ENCODE measurements at regions of chr6 and their contacts with region 1.

Region 1: GRCh38 chr6:106512048-106512967 is 117.0 kb downstream of the RTN4IP1 start:
- DNase-seq: no peak
- ATAC-seq: peak; percentile 75
- H3K4me3 ChIP-seq: peak overlapping the region; percentile 87
- H3K27ac ChIP-seq: peak overlapping the region; percentile 90
- H3K4me1 ChIP-seq: peaks cover 5% of the 10 kb centered on the region; the same call in 1 of the 2 replicates
- H3K27me3 ChIP-seq: no peaks in the 10 kb centered on the region; a peak in 1 of 4 replicates
- CTCF ChIP-seq: peak in 2 of 3 experiments; percentile 45 to 59; a peak in 3 of 6 replicates
- EP300 ChIP-seq: no peak
- POLR2A ChIP-seq: peak; percentile 57; the same call in 1 of the 2 replicates
- RAD21 ChIP-seq: peak; percentile 45

Region 2: GRCh38 chr6:105452924-105453756 is 1059.2 kb before region 1 on chr6:
- CTCF ChIA-PET with region 1: no interaction called
- POLR2A ChIA-PET with region 1: no interaction called
- RAD21 ChIA-PET with region 1: no interaction called
- SMC1A ChIA-PET with region 1: no interaction called
- in situ Hi-C with region 1: loop called (anchors 25 kb)
- intact Hi-C with region 1: no loop called
- DNase-seq: peak; percentile 54
- ATAC-seq: peak; percentile 89
- H3K4me3 ChIP-seq: no peak overlapping the region
- H3K27ac ChIP-seq: peak overlapping the region; percentile 35
- H3K4me1 ChIP-seq: peaks cover 15% of the 10 kb centered on the region
- H3K27me3 ChIP-seq: no peaks in the 10 kb centered on the region
- CTCF ChIP-seq: no peak
- EP300 ChIP-seq: peak; percentile 49 to 63; a peak in 3 of 4 replicates
- POLR2A ChIP-seq: no peak
- RAD21 ChIP-seq: no peak

Region 3: DNA sequence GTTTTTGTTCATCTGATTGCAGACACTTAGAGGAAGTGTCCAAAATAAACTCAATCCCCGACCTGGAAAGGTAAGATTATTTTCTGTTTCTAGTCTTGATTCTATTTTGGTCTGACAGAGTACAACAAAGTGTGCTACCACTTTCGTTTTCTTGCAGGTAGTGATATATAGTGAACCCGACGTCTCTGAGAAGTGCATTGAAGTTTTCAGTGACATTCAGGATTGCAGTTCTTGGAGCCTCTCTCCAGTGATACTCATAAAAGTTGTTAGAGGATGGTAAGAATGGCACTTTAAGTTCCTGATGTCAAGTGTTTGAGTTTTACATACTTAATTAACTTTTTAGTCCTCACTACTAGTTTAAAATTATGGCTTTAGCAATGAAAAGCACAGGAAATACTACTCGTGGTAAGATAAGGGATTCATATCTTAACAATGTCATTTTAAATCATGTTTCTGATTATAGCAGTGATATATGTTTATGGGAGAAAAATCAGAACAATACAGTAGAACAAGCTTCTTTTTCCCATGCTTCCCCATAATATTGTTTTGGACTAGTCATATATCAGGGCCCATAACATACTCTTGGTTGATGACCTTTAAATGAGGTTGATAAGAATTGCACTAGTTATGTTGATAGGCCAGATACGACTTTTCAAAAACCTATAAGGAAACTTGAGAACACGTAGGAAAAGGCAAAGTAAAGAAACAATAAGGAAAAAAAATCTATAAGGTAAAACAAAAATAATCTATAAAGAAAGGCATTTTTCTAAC is 13.0 kb after region 1 on chr6:
- CTCF ChIA-PET with region 1: interaction called, 51 read pairs
- POLR2A ChIA-PET with region 1: interaction called, 47 read pairs
- RAD21 ChIA-PET with region 1: interaction called, 101 read pairs
- SMC1A ChIA-PET with region 1: interaction called, 109 read pairs
- in situ Hi-C with region 1: no loop called
- intact Hi-C with region 1: loop called (anchors 1 kb)
- DNase-seq: no peak
- ATAC-seq: peak; percentile 39
- H3K4me3 ChIP-seq: peak overlapping the region; percentile 66
- H3K27ac ChIP-seq: peak overlapping the region; percentile 68
- H3K4me1 ChIP-seq: peaks cover 7% of the 10 kb centered on the region; the same call in 1 of the 2 replicates
- H3K27me3 ChIP-seq: no peaks in the 10 kb centered on the region
- CTCF ChIP-seq: no peak
- EP300 ChIP-seq: no peak
- POLR2A ChIP-seq: no peak
- RAD21 ChIP-seq: no peak

Region 4: GRCh38 chr6:106534564-106534982 is 22.3 kb after region 1 on chr6:
- CTCF ChIA-PET with region 1: interaction called, 15 read pairs
- POLR2A ChIA-PET with region 1: interaction called, 7 read pairs
- RAD21 ChIA-PET with region 1: interaction called, 7 read pairs
- SMC1A ChIA-PET with region 1: interaction called, 12 read pairs
- in situ Hi-C with region 1: no loop called
- intact Hi-C with region 1: no loop called
- DNase-seq: no peak
- ATAC-seq: peak; percentile 55
- H3K4me3 ChIP-seq: no peak overlapping the region
- H3K27ac ChIP-seq: no peak overlapping the region
- H3K4me1 ChIP-seq: peaks cover 16% of the 10 kb centered on the region
- H3K27me3 ChIP-seq: no peaks in the 10 kb centered on the region
- CTCF ChIP-seq: no peak
- EP300 ChIP-seq: no peak
- POLR2A ChIP-seq: no peak
- RAD21 ChIP-seq: no peak

Region 5: GRCh38 chr6:106539936-106540335 is 27.6 kb after region 1 on chr6:
- CTCF ChIA-PET with region 1: interaction called, 15 read pairs
- POLR2A ChIA-PET with region 1: no interaction called
- RAD21 ChIA-PET with region 1: interaction called, 7 read pairs
- SMC1A ChIA-PET with region 1: interaction called, 12 read pairs
- in situ Hi-C with region 1: no loop called
- intact Hi-C with region 1: no loop called
- DNase-seq: no peak
- ATAC-seq: no peak; the same call in 2 of the 3 replicates
- H3K4me3 ChIP-seq: no peak overlapping the region
- H3K27ac ChIP-seq: no peak overlapping the region
- H3K4me1 ChIP-seq: peaks cover 2% of the 10 kb centered on the region; the same call in 1 of the 2 replicates
- H3K27me3 ChIP-seq: no peaks in the 10 kb centered on the region
- CTCF ChIP-seq: no peak
- EP300 ChIP-seq: no peak
- POLR2A ChIP-seq: no peak
- RAD21 ChIP-seq: no peak

Region 6: GRCh38 chr6:106556368-106556960 is 44.2 kb after region 1 on chr6:
- CTCF ChIA-PET with region 1: interaction called, 79 read pairs
- POLR2A ChIA-PET with region 1: no interaction called
- RAD21 ChIA-PET with region 1: interaction called, 12 read pairs
- SMC1A ChIA-PET with region 1: interaction called, 9 read pairs
- in situ Hi-C with region 1: no loop called
- intact Hi-C with region 1: no loop called
- DNase-seq: no peak
- ATAC-seq: peak; percentile 47; the same call in 2 of the 3 replicates
- H3K4me3 ChIP-seq: no peak overlapping the region
- H3K27ac ChIP-seq: no peak overlapping the region
- H3K4me1 ChIP-seq: no peaks in the 10 kb centered on the region
- H3K27me3 ChIP-seq: no peaks in the 10 kb centered on the region
- CTCF ChIP-seq: peak; percentile 16 to 37 (median 23); a peak in 3 of 6 replicates
- EP300 ChIP-seq: no peak
- POLR2A ChIP-seq: no peak
- RAD21 ChIP-seq: peak; percentile 63